Activated CD8-positive, alpha-beta T cell treated with anti-CD3 and anti-CD28 coated beads, Interleukin-2, amount 10 ng/mL, durations not matched to agents 7 days and 5 days (primary cell): ENCODE measurements at regions of chr17 and their contacts with region 1.

Region 1: GRCh38 chr17:17313350-17313991 is 10.3 kb downstream of the NT5M start:
- DNase-seq: peak; percentile 82
- ATAC-seq: peak; percentile 98
- H3K4me3 Mint-ChIP-seq: no peak overlapping the region
- H3K27ac Mint-ChIP-seq: no peak overlapping the region
- H3K4me1 Mint-ChIP-seq: peaks cover 7% of the 10 kb centered on the region
- H3K27me3 Mint-ChIP-seq: no peaks in the 10 kb centered on the region

Region 2: GRCh38 chr17:17141860-17142552 is 171.5 kb before region 1 on chr17:
- CTCF ChIA-PET with region 1: interaction called, 11 read pairs
- POLR2A ChIA-PET with region 1: no interaction called
- DNase-seq: peak; percentile 42
- ATAC-seq: no peak
- H3K4me3 Mint-ChIP-seq: no peak overlapping the region
- H3K27ac Mint-ChIP-seq: peak overlapping the region; percentile 44
- H3K4me1 Mint-ChIP-seq: peaks cover 17% of the 10 kb centered on the region
- H3K27me3 Mint-ChIP-seq: no peaks in the 10 kb centered on the region

Region 3: GRCh38 chr17:17191346-17191792 is 122.1 kb before region 1 on chr17:
- CTCF ChIA-PET with region 1: no interaction called
- POLR2A ChIA-PET with region 1: no interaction called
- DNase-seq: no peak
- ATAC-seq: no peak
- H3K4me3 Mint-ChIP-seq: no peak overlapping the region
- H3K27ac Mint-ChIP-seq: no peak overlapping the region
- H3K4me1 Mint-ChIP-seq: peaks cover 4% of the 10 kb centered on the region
- H3K27me3 Mint-ChIP-seq: no peaks in the 10 kb centered on the region

Region 4: DNA sequence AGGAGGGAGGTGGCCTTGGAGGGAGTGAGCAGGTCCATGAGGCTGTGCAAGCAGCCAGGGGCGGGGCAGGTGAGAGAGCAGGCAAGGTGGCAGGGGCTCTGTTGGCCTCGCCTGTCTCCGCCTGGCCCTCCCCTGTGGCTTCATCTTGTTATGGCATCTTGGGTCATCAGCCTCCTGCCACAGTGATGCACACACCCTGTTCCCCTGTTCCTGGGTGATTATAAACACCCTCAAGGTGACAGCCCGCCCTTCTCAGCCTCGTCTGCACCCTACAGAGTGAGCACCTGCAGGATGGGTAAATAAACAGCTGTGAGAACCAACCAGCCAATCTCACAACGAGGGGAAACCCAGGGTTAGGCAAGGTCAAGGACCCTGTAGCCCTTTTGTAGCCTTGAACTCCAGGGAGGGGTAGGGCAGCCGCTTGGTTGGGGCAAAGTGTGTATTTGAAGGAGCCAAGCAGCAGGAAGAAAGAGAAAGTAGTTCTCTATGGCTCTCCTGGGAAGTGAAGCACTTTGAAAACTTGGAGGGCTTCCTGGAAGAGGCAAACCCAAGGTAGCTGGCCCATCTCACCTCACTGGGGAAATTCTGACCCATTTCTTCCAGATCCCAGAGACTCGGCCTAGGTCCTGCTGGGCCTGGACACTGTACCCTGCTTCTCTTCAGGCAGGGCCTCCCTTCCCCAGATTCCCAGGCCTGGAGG is 50.3 kb after region 1 on chr17:
- CTCF ChIA-PET with region 1: no interaction called
- POLR2A ChIA-PET with region 1: no interaction called
- DNase-seq: no peak
- ATAC-seq: no peak
- H3K4me3 Mint-ChIP-seq: no peak overlapping the region
- H3K27ac Mint-ChIP-seq: no peak overlapping the region
- H3K4me1 Mint-ChIP-seq: no peaks in the 10 kb centered on the region
- H3K27me3 Mint-ChIP-seq: peaks cover 27% of the 10 kb centered on the region

Region 5: DNA sequence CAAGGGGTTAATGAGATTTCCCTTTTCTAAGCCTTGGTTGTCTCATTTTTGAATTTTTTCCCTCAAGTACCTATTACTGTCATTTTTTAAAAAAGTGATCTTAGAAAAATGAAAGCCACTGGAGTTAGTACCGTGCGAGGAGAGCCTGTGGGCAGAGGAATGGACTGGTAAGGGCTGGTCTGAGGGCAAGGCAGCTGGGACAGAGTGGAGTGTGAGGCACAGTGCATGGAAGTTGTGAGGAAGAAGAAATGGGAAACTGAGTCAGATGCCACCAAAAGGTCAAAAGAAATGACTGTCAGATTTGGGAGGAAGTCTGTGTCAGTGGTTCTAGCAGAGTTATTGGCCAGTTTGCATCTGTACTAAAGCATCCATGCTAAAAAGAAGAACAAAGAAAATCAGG is 174.5 kb after region 1 on chr17:
- CTCF ChIA-PET with region 1: no interaction called
- POLR2A ChIA-PET with region 1: no interaction called
- DNase-seq: no peak
- ATAC-seq: no peak
- H3K4me3 Mint-ChIP-seq: no peak overlapping the region
- H3K27ac Mint-ChIP-seq: peak overlapping the region; percentile 22
- H3K4me1 Mint-ChIP-seq: peaks cover 39% of the 10 kb centered on the region
- H3K27me3 Mint-ChIP-seq: no peaks in the 10 kb centered on the region